Mammary epithelial cell (primary cell): ENCODE measurements at regions of chr6 and their contacts with region 1.

Region 1: DNA sequence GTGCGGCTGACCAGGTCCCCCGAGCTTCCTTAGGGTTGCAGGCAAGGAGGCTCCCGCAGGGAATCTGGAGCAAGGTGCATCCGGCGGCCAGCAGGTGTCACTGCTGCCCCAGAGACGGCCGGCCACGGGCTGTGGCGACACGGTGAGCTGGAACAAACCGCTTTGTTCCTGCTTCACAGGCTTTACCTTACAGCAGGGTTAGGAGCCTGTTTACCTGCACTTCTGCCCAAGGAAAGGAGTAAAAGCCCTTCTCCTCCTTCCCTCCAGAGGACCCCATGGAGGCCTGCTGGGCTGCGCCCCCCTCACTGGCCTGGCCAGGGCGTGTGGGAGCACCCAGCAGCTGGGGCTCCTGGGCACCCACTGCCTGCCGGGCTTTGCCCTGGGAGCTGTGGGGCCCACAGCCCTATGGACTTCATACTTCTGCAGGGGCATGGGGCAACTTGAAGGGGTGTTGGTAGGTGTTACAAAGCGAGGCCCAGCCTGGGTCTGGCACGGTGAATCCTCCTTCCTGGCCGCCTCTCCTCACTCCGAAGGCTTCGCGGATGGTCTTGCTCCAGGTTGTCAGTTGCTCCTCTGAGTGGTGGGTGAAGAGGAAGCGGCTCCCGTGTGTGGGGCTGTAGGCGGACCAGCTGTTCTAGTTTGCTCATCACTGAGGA is 88.4 kb downstream of the CDC5L start:
- DNase-seq: peak; percentile 70
- H3K4me3 ChIP-seq: no peak overlapping the region
- H3K27ac ChIP-seq: no peak overlapping the region
- H3K4me1 ChIP-seq: peaks cover 15% of the 10 kb centered on the region
- H3K27me3 ChIP-seq: no peaks in the 10 kb centered on the region
- CTCF ChIP-seq: peak; percentile 89 to 97

Region 2: DNA sequence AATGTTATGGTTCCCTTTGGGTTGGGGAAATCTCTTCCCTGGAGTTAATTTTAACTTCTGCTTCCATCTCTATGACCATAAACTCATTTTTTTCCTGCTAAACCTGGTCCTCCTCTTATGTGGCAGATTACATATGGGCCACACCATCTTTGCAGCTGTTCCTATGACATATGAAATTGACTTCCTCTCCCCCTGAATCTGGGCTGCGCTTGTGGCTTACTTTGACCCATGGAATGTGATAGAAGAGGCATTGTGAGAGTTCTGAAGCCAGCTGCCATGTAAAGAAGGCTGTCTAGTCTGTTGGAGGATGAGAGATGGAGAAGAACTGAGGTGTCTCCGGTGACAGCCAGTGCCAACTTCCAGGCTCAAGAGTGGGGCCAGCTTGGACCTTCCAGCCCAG is 11.7 kb after region 1 on chr6:
- CTCF ChIA-PET with region 1: interaction called, 6 read pairs
- dilution Hi-C with region 1: no loop called
- in situ Hi-C with region 1: no loop called
- intact Hi-C with region 1: loop called (anchors 1 kb)
- DNase-seq: no peak
- H3K4me3 ChIP-seq: no peak overlapping the region
- H3K27ac ChIP-seq: no peak overlapping the region
- H3K4me1 ChIP-seq: peaks cover 32% of the 10 kb centered on the region
- H3K27me3 ChIP-seq: no peaks in the 10 kb centered on the region
- CTCF ChIP-seq: no peak

Region 3: DNA sequence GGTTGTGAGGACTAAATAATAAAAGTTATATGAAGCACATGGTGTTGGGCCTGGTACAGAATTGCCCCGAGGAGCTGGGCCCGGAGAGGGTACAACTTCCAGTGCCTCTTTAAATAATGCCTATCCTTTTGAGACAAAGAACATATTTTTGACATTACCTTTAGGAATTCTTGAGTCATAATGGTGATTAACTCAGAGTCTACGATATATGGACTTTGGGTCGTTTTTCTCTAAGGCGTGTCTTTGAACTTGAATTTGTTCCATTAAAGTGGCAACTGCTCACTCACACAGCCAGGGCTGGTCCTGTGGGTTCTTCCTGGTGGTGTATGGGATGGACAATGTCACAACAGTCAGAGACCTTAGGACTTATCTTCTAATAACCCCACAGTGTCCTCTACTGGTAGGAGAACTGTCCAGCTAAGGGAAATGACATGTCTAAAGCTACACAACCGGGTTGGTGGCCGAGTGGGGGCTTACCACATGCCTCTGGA is 18.1 kb after region 1 on chr6:
- CTCF ChIA-PET with region 1: interaction called, 6 read pairs
- dilution Hi-C with region 1: no loop called
- in situ Hi-C with region 1: no loop called
- intact Hi-C with region 1: loop called (anchors 1 kb)
- DNase-seq: peak; percentile 80
- H3K4me3 ChIP-seq: no peak overlapping the region
- H3K27ac ChIP-seq: peak overlapping the region; percentile 78
- H3K4me1 ChIP-seq: peaks cover 43% of the 10 kb centered on the region
- H3K27me3 ChIP-seq: no peaks in the 10 kb centered on the region
- CTCF ChIP-seq: peak; percentile 5 to 44

Region 4: GRCh38 chr6:44571510-44571909 is 95.6 kb after region 1 on chr6:
- CTCF ChIA-PET with region 1: interaction called, 7 read pairs
- dilution Hi-C with region 1: no loop called
- in situ Hi-C with region 1: no loop called
- intact Hi-C with region 1: loop called (anchors 1 kb)
- DNase-seq: no peak
- H3K4me3 ChIP-seq: no peak overlapping the region
- H3K27ac ChIP-seq: no peak overlapping the region
- H3K4me1 ChIP-seq: no peaks in the 10 kb centered on the region
- H3K27me3 ChIP-seq: no peaks in the 10 kb centered on the region
- CTCF ChIP-seq: peak in 1 of 2 donors; percentile 29

Region 5: DNA sequence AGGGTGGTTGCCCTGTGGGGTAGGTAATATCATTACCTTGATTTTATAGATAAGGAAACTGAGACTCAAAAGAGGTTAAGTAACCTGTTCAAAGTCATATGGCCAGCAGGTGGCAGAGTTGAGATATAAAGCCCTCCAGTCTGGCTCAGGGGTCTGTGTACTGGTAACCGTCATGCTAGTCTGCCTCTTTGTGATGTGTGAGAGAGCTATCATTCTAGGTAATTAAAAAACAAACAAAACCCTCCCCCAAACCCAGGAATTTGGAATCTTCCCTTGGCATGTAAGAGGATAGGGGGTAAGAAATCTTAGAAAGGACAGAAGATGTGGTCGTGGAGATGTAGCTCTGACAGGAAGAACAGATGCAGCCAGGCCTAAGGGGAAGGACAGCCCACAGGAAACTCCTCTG is 117.6 kb after region 1 on chr6:
- CTCF ChIA-PET with region 1: interaction called, 5 read pairs
- dilution Hi-C with region 1: no loop called
- in situ Hi-C with region 1: no loop called
- intact Hi-C with region 1: loop called (anchors 5 kb)
- DNase-seq: no peak
- H3K4me3 ChIP-seq: no peak overlapping the region
- H3K27ac ChIP-seq: no peak overlapping the region
- H3K4me1 ChIP-seq: no peaks in the 10 kb centered on the region
- H3K27me3 ChIP-seq: no peaks in the 10 kb centered on the region
- CTCF ChIP-seq: peak; percentile 40 to 54

Region 6: DNA sequence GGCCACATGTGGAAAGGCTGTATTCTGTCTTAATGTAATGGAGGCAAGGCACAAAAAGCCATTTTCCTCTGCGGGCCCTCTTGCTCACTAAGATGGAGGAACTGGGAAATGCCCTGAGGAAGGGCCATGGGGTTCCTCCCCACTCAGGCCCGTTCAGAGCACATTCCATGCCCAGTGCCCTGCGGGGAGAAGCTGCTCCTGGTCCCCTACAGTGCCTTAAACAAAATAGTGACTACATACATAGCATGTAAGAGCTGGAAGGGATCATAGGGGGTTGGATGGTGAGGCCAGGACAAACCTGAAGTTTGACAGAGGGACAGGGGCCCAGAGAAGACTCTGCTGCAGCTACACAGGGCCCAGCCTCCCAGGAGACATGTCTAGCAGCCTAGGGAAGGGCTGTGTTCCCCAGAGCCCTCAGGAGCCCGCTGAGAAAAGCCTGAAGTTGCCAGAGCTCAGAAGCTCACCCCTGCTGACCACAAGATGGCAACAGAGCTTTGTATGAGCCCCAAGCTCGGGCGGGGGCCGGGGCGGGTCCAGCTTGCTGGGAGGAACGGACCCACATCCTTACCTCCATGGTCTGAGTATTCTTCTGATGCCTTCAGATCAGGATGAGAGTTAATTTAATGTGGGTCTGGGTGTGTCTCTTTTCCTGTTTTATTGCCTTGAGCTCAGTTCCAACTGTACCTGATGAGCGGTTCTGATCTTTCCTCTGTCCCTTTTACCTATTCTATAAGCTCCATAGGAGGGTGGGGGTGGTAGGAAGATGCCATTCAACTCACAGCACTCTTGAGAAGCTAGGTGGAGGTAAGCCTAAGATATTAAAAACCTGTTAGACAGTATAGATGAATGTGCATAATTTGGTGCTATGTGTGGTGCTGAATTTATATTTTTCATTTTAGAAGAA is 154.5 kb after region 1 on chr6:
- CTCF ChIA-PET with region 1: interaction called, 10 read pairs
- dilution Hi-C with region 1: no loop called
- in situ Hi-C with region 1: no loop called
- intact Hi-C with region 1: loop called (anchors 1 kb)
- DNase-seq: peak; percentile 33
- H3K4me3 ChIP-seq: no peak overlapping the region
- H3K27ac ChIP-seq: no peak overlapping the region
- H3K4me1 ChIP-seq: no peaks in the 10 kb centered on the region
- H3K27me3 ChIP-seq: no peaks in the 10 kb centered on the region
- CTCF ChIP-seq: peak; percentile 46 to 74

Region 7: GRCh38 chr6:44655412-44656342 is 179.8 kb after region 1 on chr6:
- CTCF ChIA-PET with region 1: interaction called, 3 read pairs
- dilution Hi-C with region 1: no loop called
- in situ Hi-C with region 1: no loop called
- intact Hi-C with region 1: loop called (anchors 2 kb)
- DNase-seq: peak; percentile 22
- H3K4me3 ChIP-seq: no peak overlapping the region
- H3K27ac ChIP-seq: no peak overlapping the region
- H3K4me1 ChIP-seq: peaks cover 9% of the 10 kb centered on the region
- H3K27me3 ChIP-seq: no peaks in the 10 kb centered on the region
- CTCF ChIP-seq: peak; percentile 88 to 93

Region 8: DNA sequence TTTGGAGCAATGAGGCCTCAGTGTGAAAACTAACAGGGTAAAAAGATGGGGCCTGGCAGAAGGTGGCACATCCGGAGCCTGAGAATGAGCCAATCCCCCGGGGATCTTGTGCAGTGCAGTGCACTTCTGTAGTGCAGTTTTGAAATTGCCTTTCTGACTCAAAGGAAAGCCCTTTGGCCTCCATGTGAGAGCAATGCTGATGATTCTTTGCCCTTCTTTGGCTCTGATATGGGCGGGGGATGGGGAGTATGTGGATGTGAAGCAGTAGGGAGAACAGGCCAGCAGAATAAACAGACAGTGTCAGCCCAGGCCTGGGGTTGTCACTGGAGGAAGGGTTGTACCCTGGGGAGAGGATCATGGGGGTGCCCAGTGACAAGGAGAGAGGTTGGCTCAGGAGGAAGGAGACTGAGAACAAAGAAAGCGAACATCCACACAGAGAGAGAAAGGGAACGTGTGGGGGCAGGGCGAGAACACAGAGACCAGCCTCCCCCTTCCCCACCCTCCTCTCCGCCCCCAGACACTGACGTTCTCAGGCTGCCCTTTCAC is 262.8 kb after region 1 on chr6:
- CTCF ChIA-PET with region 1: no interaction called
- dilution Hi-C with region 1: no loop called
- in situ Hi-C with region 1: no loop called
- intact Hi-C with region 1: no loop called
- DNase-seq: peak; percentile 21
- H3K4me3 ChIP-seq: no peak overlapping the region
- H3K27ac ChIP-seq: no peak overlapping the region
- H3K4me1 ChIP-seq: peaks cover 11% of the 10 kb centered on the region
- H3K27me3 ChIP-seq: peaks cover 2% of the 10 kb centered on the region
- CTCF ChIP-seq: no peak